ENCODE measurements at regions of chr14 and their contacts with region 1.

Region 1: GRCh38 chr14:31257244-31257553 is 49.6 kb upstream of the HECTD1 start:
- DNase-seq: no peak
- ATAC-seq: no peak
- H3K4me3 ChIP-seq: no peak overlapping the region
- H3K27ac ChIP-seq: peak overlapping the region; percentile 89
- H3K4me1 ChIP-seq: peaks cover 96% of the 10 kb centered on the region
- H3K27me3 ChIP-seq: no peaks in the 10 kb centered on the region; a peak in 1 of 5 replicates
- CTCF ChIP-seq: no peak
- EP300 ChIP-seq: no peak
- POLR2A ChIP-seq: no peak
- RAD21 ChIP-seq: no peak

Region 2: GRCh38 chr14:31194095-31194494 is 63.1 kb before region 1 on chr14:
- CTCF ChIA-PET with region 1: no interaction called
- POLR2A ChIA-PET with region 1: no interaction called
- in situ Hi-C with region 1: no loop called
- intact Hi-C with region 1: no loop called
- DNase-seq: no peak
- ATAC-seq: no peak
- H3K4me3 ChIP-seq: no peak overlapping the region
- H3K27ac ChIP-seq: no peak overlapping the region
- H3K4me1 ChIP-seq: peaks cover 46% of the 10 kb centered on the region
- H3K27me3 ChIP-seq: no peaks in the 10 kb centered on the region
- CTCF ChIP-seq: no peak
- EP300 ChIP-seq: no peak
- POLR2A ChIP-seq: no peak
- RAD21 ChIP-seq: no peak

Region 3: GRCh38 chr14:31270196-31270772 is 13.1 kb after region 1 on chr14:
- CTCF ChIA-PET with region 1: no interaction called
- POLR2A ChIA-PET with region 1: interaction called, 35 read pairs
- in situ Hi-C with region 1: no loop called
- intact Hi-C with region 1: loop called (anchors 1 kb)
- DNase-seq: peak; percentile 77
- ATAC-seq: peak; percentile 73
- H3K4me3 ChIP-seq: no peak overlapping the region
- H3K27ac ChIP-seq: no peak overlapping the region
- H3K4me1 ChIP-seq: peaks cover 66% of the 10 kb centered on the region
- H3K27me3 ChIP-seq: no peaks in the 10 kb centered on the region
- CTCF ChIP-seq: peak; percentile 94
- EP300 ChIP-seq: no peak
- POLR2A ChIP-seq: no peak
- RAD21 ChIP-seq: peak; percentile 53

Region 4: DNA sequence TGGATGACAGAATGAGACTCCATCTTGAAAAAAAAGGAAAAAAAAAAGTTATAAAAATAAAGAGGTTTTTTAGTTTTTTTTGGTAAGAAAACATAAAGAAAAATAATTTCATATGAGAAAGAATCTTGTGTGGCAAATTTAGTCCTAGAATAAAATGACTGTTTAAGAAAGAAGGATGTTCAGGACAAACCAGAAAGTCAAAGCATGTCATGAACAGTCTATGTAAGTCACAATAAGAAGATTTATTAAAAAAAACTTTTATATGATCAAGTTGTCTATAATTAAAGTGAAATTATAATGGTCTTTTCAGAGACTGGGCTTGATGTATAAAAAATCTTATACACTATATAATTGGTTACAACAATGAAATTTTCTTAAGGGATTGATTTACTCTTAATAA is 18.5 kb after region 1 on chr14:
- CTCF ChIA-PET with region 1: no interaction called
- POLR2A ChIA-PET with region 1: interaction called, 35 read pairs
- in situ Hi-C with region 1: no loop called
- intact Hi-C with region 1: no loop called
- DNase-seq: no peak
- ATAC-seq: no peak
- H3K4me3 ChIP-seq: no peak overlapping the region
- H3K27ac ChIP-seq: no peak overlapping the region
- H3K4me1 ChIP-seq: peaks cover 48% of the 10 kb centered on the region
- H3K27me3 ChIP-seq: no peaks in the 10 kb centered on the region
- CTCF ChIP-seq: no peak
- EP300 ChIP-seq: no peak
- POLR2A ChIP-seq: no peak
- RAD21 ChIP-seq: no peak

Region 5: GRCh38 chr14:31307198-31307597 is 50.0 kb after region 1 on chr14:
- CTCF ChIA-PET with region 1: no interaction called
- POLR2A ChIA-PET with region 1: no interaction called
- in situ Hi-C with region 1: no loop called
- intact Hi-C with region 1: no loop called
- DNase-seq: no peak
- ATAC-seq: peak; percentile 51
- H3K4me3 ChIP-seq: no peak overlapping the region
- H3K27ac ChIP-seq: no peak overlapping the region
- H3K4me1 ChIP-seq: no peaks in the 10 kb centered on the region
- H3K27me3 ChIP-seq: no peaks in the 10 kb centered on the region
- CTCF ChIP-seq: no peak
- EP300 ChIP-seq: no peak
- POLR2A ChIP-seq: no peak
- RAD21 ChIP-seq: no peak